PC-3 (cell line): ENCODE measurements at regions of chr15 and their contacts with region 1.

Region 1: DNA sequence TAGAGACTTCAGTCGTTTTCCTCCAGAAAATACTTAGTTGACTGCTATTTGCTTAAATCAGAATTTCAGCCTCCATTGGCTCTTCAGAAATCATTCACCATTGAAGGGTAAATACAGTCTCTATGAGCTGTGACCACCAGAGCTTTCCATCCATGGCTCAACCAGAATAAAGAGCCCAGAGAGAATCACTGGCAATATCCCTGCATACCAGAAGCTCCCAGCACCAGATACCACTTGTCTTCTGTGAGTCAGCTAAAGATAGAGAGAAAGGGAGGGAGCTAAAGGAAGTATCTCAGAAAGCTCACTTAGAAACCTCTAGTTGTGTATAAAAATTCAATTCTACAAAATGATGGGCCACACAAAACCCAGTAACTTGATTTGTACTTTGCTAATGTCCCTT is 115.2 kb upstream of the TMCO5A start:
- DNase-seq: no peak
- ATAC-seq: no peak
- H3K4me3 ChIP-seq: no peak overlapping the region
- H3K27ac ChIP-seq: no peak overlapping the region
- H3K4me1 ChIP-seq: peaks cover 1% of the 10 kb centered on the region; the same call in 1 of the 2 replicates
- H3K27me3 ChIP-seq: peaks cover 60% of the 10 kb centered on the region
- CTCF ChIP-seq: no peak

Region 2: GRCh38 chr15:37416103-37416502 is 403.1 kb before region 1 on chr15:
- CTCF ChIA-PET with region 1: no interaction called
- POLR2A ChIA-PET with region 1: no interaction called
- intact Hi-C with region 1: no loop called
- DNase-seq: no peak
- ATAC-seq: no peak
- H3K4me3 ChIP-seq: no peak overlapping the region
- H3K27ac ChIP-seq: no peak overlapping the region
- H3K4me1 ChIP-seq: no peaks in the 10 kb centered on the region
- H3K27me3 ChIP-seq: peaks cover 29% of the 10 kb centered on the region
- CTCF ChIP-seq: no peak

Region 3: GRCh38 chr15:37860896-37861295 is 41.7 kb after region 1 on chr15:
- CTCF ChIA-PET with region 1: no interaction called
- POLR2A ChIA-PET with region 1: interaction called, 45 read pairs
- intact Hi-C with region 1: no loop called
- DNase-seq: no peak
- ATAC-seq: no peak
- H3K4me3 ChIP-seq: no peak overlapping the region
- H3K27ac ChIP-seq: no peak overlapping the region
- H3K4me1 ChIP-seq: no peaks in the 10 kb centered on the region
- H3K27me3 ChIP-seq: peaks cover 40% of the 10 kb centered on the region; the same call in 1 of the 2 replicates
- CTCF ChIP-seq: no peak